ENCODE measurements at regions of chr12 and their contacts with region 1.

Region 1: DNA sequence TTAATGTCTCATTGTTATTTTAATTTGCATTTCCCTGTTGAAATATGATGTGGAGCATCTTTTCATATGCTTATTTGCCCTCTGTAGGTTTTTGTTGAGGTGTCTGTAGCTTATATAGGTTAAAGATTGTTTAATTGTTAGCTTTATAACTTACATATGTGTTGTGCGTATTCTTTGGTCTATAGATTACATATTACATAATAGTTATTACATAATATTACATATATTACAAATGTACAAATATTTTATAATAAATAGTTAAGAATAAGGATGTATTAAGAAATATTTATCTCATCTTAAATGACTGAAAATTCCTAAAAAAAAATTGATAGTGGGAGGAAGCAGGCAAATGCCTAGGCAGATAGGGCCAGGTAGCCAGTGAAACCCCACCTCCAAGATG is 241.5 kb upstream of the ALG10 start:
- DNase-seq: no peak
- ATAC-seq: no peak
- H3K4me3 Mint-ChIP-seq: no peak overlapping the region
- H3K27ac Mint-ChIP-seq: no peak overlapping the region
- H3K4me1 Mint-ChIP-seq: no peaks in the 10 kb centered on the region
- H3K27me3 Mint-ChIP-seq: no peaks in the 10 kb centered on the region

Region 2: GRCh38 chr12:33825986-33826602 is 45.3 kb after region 1 on chr12:
- CTCF ChIA-PET with region 1: no interaction called
- POLR2A ChIA-PET with region 1: no interaction called
- intact Hi-C with region 1: loop called in 1 of 2 experiments (anchors 5 kb)
- DNase-seq: no peak
- ATAC-seq: no peak
- H3K4me3 Mint-ChIP-seq: no peak overlapping the region
- H3K27ac Mint-ChIP-seq: no peak overlapping the region
- H3K4me1 Mint-ChIP-seq: no peaks in the 10 kb centered on the region
- H3K27me3 Mint-ChIP-seq: no peaks in the 10 kb centered on the region

Region 3: DNA sequence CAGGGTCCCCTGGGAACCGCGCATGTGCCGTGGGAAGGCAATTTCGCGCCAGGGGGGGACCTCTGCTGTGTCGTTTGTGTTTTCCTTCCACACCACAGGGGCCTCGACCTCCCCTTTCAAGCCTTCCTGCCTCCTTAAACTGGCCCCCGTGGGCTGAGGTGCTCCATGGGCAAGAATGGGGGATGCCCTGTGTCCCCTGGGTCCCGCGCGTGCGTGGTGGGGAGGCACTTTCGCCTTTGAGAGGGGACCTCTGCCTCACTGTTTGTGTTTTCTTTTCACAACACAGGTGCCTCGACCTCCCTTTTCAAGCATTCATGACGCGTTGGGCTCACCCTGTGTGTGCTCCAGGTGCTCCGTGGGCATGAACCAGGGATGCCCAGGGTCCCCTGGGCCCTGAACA is 590.3 kb after region 1 on chr12:
- CTCF ChIA-PET with region 1: no interaction called
- POLR2A ChIA-PET with region 1: no interaction called
- intact Hi-C with region 1: no loop called
- DNase-seq: no peak
- ATAC-seq: no peak
- H3K4me3 Mint-ChIP-seq: no peak overlapping the region
- H3K27ac Mint-ChIP-seq: no peak overlapping the region
- H3K4me1 Mint-ChIP-seq: no peaks in the 10 kb centered on the region
- H3K27me3 Mint-ChIP-seq: no peaks in the 10 kb centered on the region